Adrenal gland (tissue), 19 donors: ENCODE measurements at regions of chr16 and their contacts with region 1.

Region 1: GRCh38 chr16:10181196-10182162 is 749 bp downstream of the GRIN2A start:
- DNase-seq: peak; percentile 40 to 84 (median 59)
- H3K4me3 ChIP-seq: peak overlapping the region in 1 of 4 donors; percentile 34
- H3K27ac ChIP-seq: peak overlapping the region in 1 of 5 donors; percentile 41
- H3K4me1 ChIP-seq: no peaks in the 10 kb centered on the region
- H3K27me3 ChIP-seq: peaks cover 32% of the 10 kb centered on the region
- CTCF ChIP-seq: peak; percentile 66 to 89 (median 84)
- POLR2A ChIP-seq: no peak

Region 2: DNA sequence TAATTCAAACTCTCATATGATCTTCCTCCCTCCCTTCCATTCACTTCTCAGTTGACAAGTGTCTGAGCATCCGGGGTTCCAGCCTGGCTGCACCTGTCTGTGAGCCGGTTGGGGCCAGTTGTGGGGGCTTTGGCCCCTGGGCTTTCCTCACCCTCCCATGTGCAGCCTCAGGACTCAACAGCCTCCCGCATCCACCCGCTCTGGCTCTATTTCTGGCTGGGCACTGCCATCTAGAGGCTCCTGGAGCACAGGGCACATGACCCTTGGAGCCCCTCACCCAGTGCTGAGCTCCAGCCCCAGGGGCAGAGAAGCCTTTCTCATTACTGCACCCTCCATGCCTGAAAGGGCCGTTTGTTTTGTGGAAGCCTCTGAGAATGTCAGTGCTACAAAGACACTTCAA is 1046.7 kb before region 1 on chr16:
- intact Hi-C with region 1: loop called in 1 of 2 experiments (anchors 5 kb)
- DNase-seq: peak; percentile 42 to 74 (median 63)
- H3K4me3 ChIP-seq: no peak overlapping the region
- H3K27ac ChIP-seq: no peak overlapping the region
- H3K4me1 ChIP-seq: peaks cover 0 to 7% of the 10 kb centered on the region in 2 donors
- H3K27me3 ChIP-seq: no peaks in the 10 kb centered on the region
- CTCF ChIP-seq: peak in 5 of 6 experiments; percentile 35 to 68 (median 57)
- POLR2A ChIP-seq: no peak

Region 3: GRCh38 chr16:9159839-9160550 is 1021.5 kb before region 1 on chr16:
- intact Hi-C with region 1: loop called in 1 of 2 experiments (anchors 5 kb)
- DNase-seq: peak; percentile 38 to 84 (median 64)
- H3K4me3 ChIP-seq: no peak overlapping the region
- H3K27ac ChIP-seq: no peak overlapping the region
- H3K4me1 ChIP-seq: no peaks in the 10 kb centered on the region
- H3K27me3 ChIP-seq: peaks cover 7% of the 10 kb centered on the region
- CTCF ChIP-seq: peak; percentile 25 to 72 (median 56)
- POLR2A ChIP-seq: no peak

Region 4: GRCh38 chr16:10266809-10267208 is 85.3 kb after region 1 on chr16:
- intact Hi-C with region 1: no loop called
- DNase-seq: no peak
- H3K4me3 ChIP-seq: no peak overlapping the region
- H3K27ac ChIP-seq: no peak overlapping the region
- H3K4me1 ChIP-seq: no peaks in the 10 kb centered on the region
- H3K27me3 ChIP-seq: no peaks in the 10 kb centered on the region
- CTCF ChIP-seq: no peak
- POLR2A ChIP-seq: no peak